Upper lobe of right lung (tissue), 1 donor: ENCODE measurements at regions of chr13 and their contacts with region 1.

Region 1: DNA sequence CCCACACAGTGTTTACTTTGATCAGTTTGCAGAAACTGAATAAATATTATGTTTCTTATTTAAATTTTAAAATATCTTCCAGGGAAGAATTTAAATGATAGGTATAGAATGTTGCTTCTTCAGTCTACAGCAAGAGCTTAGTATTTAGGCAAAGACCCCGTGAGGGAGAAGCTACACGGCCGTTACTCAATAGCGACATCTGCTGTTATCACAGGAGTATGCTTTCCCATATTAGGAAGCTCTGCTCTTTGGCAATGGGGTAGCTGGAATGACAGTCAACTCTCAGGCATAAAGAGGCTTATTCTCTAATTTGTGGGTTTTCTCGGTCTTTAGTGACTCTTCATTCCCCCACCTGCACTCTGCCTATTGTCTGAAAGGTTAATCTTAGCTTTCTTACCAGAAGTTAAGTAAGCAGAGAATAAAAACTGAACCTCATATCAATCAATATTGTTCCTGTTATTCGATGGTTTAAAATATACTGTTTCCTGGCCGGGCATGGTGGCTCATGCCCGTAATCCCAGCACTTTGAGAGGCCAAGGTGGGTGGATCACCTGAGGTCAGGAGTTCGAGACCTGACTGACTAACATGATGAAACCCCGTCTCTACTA is 13.2 kb upstream of the LHFPL6 start:
- DNase-seq: no peak
- ATAC-seq: peak; percentile 92
- H3K4me3 ChIP-seq: no peak overlapping the region
- H3K27ac ChIP-seq: no peak overlapping the region
- H3K4me1 ChIP-seq: no peaks in the 10 kb centered on the region
- H3K27me3 ChIP-seq: no peaks in the 10 kb centered on the region
- CTCF ChIP-seq: peak; percentile 90

Region 2: GRCh38 chr13:39047560-39047959 is 568.6 kb before region 1 on chr13:
- intact Hi-C with region 1: loop called (anchors 10 kb)
- DNase-seq: no peak
- ATAC-seq: peak; percentile 53
- H3K4me3 ChIP-seq: no peak overlapping the region
- H3K27ac ChIP-seq: no peak overlapping the region
- H3K4me1 ChIP-seq: no peaks in the 10 kb centered on the region
- H3K27me3 ChIP-seq: no peaks in the 10 kb centered on the region
- CTCF ChIP-seq: peak; percentile 9

Region 3: DNA sequence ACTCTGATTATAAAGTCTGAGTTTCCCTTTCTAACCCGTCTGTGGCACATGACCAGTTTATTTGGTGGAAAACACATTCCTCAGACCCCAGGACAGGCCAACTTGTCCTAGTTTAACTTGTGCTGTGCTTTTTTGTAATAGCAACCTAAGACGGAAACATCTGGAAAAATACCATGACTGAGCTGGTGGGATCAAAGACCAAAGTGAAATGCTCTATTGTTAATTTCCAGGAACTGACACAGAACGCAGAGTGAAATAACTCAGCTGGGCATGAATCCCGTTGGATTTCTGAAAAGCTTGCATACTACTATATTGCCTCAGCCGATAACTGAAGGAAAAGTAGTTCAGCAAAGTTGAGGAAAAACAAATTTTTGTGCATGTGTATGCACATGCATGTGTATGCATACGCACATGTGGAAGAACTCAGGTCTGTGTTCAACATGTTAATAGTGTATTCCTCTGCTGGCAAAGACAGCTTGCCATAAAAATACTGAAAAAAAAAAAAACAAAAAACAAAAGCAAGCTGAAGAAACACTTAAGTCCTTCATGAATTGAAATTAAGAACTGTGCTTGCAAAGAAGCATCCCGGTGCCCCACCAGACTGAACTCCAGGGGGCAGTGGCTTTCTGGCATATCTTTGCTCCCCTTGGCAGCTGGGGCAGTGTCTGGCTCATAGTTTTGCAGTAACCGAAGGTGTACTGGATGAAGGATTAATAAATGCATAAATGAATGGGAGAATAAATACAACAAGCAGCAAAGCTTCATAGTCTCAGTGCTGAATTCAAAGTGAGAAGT is 201.0 kb before region 1 on chr13:
- intact Hi-C with region 1: no loop called
- DNase-seq: no peak
- ATAC-seq: peak; percentile 85
- H3K4me3 ChIP-seq: no peak overlapping the region
- H3K27ac ChIP-seq: no peak overlapping the region
- H3K4me1 ChIP-seq: peaks cover 18% of the 10 kb centered on the region
- H3K27me3 ChIP-seq: no peaks in the 10 kb centered on the region
- CTCF ChIP-seq: peak; percentile 55